Activated naive CD4-positive, alpha-beta T cell treated with anti-CD3 and anti-CD28 coated beads for 36 hours (primary cell): ENCODE measurements at regions of chr5 and their contacts with region 1.

Region 1: DNA sequence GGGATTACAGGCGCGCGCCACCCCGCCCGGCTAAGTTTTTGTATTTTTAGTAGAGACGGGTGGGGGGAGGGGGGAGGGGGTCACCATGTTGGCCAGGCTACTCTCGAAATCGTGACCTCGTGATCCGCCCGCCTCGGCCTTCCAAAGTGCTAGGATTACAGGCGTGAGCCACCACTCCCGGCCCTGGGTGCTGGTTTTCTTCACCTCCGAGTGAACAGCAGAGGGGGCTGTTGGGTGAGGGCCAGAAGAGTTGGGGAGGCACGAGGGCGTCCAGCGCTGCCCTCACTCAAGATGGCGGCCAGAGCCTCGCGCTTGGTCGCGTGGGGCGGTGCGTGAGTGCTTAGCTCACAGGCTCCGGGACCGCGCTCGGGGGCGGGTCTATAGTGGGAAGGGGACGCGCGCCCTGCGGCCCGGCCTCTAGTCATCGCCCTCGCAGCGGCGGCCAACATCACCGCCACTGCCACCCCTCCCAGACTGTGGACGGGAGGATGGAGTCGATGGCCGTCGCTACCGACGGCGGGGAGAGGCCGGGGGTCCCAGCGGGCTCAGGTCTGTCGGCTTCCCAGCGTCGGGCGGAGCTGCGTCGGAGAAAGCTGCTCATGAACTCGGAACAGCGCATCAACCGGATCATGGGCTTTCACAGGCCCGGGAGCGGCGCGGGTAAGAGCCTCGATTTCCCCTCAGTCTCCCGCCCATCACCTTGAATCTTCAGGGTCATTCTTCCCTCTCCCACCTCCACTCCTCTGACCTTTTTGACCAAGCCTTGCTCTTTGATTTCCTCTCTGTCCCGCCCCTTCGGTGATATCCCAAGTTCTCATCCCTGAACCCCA is at the start of gene CAMLG:
- DNase-seq: peak; percentile 97
- H3K4me3 Mint-ChIP-seq: peak within 1 kb of the TSS; percentile 81
- H3K27ac Mint-ChIP-seq: peak within 1 kb of the TSS; percentile 88
- H3K4me1 Mint-ChIP-seq: peaks cover 26% of the 10 kb centered on the region
- H3K27me3 Mint-ChIP-seq: no peaks in the 10 kb centered on the region
- total RNA-seq, gene CAMLG: 34.6 to 36.9 TPM

Region 2: DNA sequence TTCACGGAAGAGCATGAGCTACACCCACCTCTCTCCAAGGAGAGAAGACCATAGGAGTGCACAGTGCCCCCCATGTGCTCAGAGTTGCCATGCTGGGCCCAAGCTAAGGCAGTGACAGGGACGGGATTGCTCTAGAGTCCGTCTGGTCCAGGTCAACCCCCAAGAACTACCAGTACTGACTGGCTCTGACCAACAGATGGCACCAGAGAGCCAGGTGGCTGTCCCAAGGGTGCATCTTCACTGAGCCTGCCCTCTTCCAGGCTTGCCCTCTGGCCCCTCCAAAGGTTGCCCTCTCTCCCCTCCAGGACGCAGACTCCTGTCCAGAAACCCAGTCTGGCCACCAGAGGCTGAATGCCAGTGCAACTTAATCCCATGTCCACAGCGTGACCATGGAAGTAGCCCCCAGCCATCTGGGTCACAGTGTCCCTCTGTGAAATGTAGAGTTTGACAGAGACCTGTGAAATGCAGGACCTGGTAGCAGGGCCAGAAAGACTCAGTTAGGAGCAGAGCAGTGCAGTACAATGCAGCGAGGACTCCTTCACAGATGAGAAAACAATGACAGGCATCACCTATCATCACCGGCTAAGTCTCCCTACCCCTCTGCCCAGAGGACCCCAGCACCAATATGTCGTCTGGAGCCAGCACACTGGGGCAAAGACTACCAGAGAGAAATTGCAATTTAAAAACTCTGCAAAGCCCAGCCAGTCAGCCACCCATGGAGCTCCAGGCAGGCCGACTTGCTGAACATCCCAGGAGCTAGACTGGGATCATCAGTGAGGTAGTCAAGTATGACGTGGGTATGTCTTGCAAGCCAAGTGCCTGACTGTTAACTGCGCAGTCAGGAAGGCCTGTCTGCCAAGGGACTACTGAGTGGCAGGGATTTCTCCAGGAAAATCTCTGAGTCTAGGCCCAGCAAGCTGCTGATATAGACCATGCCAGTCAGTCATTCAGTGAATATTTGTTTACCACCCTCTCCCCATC is 553.9 kb before region 1 on chr5:
- CTCF ChIA-PET with region 1: interaction called, 8 read pairs
- intact Hi-C with region 1: loop called (anchors 2 kb)
- DNase-seq: peak; percentile 88
- H3K4me3 Mint-ChIP-seq: no peak overlapping the region
- H3K27ac Mint-ChIP-seq: no peak overlapping the region
- H3K4me1 Mint-ChIP-seq: no peaks in the 10 kb centered on the region
- H3K27me3 Mint-ChIP-seq: no peaks in the 10 kb centered on the region

Region 3: GRCh38 chr5:134411546-134412266 is 326.6 kb before region 1 on chr5 and contains the start of gene CDKN2AIPNL:
- CTCF ChIA-PET with region 1: no interaction called
- intact Hi-C with region 1: loop called (anchors 1 kb)
- DNase-seq: peak; percentile 94
- H3K4me3 Mint-ChIP-seq: peak within 1 kb of the TSS; percentile 96
- H3K27ac Mint-ChIP-seq: peak within 1 kb of the TSS; percentile 88
- H3K4me1 Mint-ChIP-seq: peaks cover 34% of the 10 kb centered on the region
- H3K27me3 Mint-ChIP-seq: no peaks in the 10 kb centered on the region
- total RNA-seq, gene CDKN2AIPNL: 31.1 to 31.5 TPM

Region 4: DNA sequence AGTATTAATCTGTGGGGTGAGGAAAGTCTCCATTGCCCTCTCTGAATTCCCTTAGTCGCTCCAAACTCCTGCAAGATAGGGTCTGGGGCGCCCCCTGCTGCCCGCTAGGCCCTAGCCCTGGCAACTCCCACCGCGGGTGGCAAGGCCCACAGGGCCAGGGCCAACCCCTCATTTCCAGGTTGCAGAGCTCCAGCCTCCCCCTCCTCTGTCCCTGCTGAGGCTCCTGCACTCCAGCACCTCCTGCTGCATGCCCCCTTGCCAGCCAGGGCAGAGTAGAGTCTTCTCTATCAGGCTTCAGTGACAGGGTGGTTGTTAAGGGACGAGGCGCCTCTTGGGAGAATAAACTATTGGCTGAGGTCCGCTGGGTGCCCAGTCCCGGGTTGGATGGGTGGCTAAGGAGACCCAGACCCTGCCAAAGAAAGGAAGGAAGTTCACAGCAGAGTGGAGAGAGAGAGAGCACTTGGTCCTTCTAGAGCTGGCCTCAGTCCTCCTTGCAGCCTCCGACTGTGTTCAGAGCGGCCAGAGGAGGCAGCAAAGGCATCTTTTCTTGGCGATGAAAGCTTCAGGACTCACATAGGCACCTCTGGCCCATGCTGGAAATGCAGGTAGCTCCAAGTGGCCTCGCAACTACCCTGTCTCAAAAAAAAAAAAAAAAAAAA is 151.4 kb before region 1 on chr5:
- CTCF ChIA-PET with region 1: interaction called, 20 read pairs
- intact Hi-C with region 1: loop called (anchors 1 kb)
- DNase-seq: peak; percentile 94
- H3K4me3 Mint-ChIP-seq: no peak overlapping the region
- H3K27ac Mint-ChIP-seq: no peak overlapping the region
- H3K4me1 Mint-ChIP-seq: peaks cover 13% of the 10 kb centered on the region
- H3K27me3 Mint-ChIP-seq: no peaks in the 10 kb centered on the region

Region 5: DNA sequence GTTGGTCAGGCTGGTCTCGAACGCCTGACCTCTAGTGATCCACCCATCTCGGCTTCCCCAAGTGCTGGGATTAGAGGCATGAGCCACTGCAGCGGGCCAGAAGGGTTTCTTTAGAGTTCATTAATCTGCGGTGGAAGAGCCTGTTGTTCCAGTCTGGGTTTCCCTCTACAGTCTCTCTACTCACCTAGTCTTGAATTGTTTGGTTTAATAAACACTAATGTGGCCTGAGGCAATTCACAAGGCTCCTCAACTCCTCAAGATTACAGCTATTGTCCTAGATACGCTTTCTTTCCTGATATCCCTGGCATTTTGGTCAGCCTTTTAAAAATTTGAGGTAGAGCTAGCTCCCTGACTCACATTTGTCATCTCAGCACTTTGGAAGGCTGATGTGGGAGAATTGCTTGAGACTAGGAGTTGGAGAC is 101.2 kb before region 1 on chr5:
- CTCF ChIA-PET with region 1: no interaction called
- intact Hi-C with region 1: loop called (anchors 1 kb)
- DNase-seq: no peak
- H3K4me3 Mint-ChIP-seq: no peak overlapping the region
- H3K27ac Mint-ChIP-seq: no peak overlapping the region
- H3K4me1 Mint-ChIP-seq: peaks cover 7% of the 10 kb centered on the region
- H3K27me3 Mint-ChIP-seq: no peaks in the 10 kb centered on the region

Region 6: DNA sequence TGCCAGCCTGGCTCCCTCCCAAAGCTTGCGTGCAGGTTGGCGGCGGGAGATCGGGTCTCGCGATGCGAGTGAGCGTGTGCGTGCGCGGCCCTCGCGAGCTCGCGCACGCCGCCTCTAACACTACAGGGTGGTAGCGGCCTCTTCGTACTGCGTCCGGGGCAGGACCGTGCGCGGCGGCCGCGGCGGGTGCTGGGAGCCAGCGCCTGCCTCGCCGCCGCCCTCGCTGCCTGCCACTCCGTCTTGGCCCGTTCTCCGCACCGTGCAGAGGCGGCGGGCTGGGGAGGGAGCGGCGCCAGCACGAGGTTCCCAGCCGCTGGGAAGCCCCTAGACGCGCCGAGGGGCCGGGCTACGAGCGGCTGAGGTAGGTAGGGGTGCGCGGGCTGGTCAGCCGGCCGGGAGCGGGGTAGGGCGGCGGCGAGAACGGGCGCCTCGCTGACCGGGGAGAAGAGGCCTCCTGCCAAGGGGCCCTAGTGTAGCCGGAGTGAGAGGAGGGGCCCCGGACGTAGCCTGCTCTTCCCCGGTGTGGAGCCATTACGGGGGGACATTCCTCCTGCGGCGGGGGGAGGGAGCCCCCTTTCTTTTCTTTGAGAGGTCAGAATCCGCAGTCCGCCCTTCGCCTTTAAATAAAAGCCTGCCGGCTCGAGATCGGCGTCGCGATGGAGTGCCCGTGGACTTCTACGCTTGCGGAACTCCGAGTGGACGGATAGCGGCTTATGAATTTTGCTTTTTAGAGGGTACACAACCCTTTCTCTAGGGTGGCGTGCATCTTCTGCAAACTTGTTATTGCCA is 107.7 kb after region 1 on chr5 and contains the start of gene C5orf24:
- CTCF ChIA-PET with region 1: interaction called, 3 read pairs
- intact Hi-C with region 1: loop called (anchors 1 kb)
- DNase-seq: peak; percentile 96
- H3K4me3 Mint-ChIP-seq: peak within 1 kb of the TSS; percentile 88
- H3K27ac Mint-ChIP-seq: peak within 1 kb of the TSS; percentile 97
- H3K4me1 Mint-ChIP-seq: peaks cover 32% of the 10 kb centered on the region
- H3K27me3 Mint-ChIP-seq: no peaks in the 10 kb centered on the region
- total RNA-seq, gene C5orf24: 17.6 to 21.2 TPM

Region 7: GRCh38 chr5:135063631-135064570 is 325.6 kb after region 1 on chr5:
- CTCF ChIA-PET with region 1: no interaction called
- intact Hi-C with region 1: no loop called
- DNase-seq: no peak
- H3K4me3 Mint-ChIP-seq: no peak overlapping the region
- H3K27ac Mint-ChIP-seq: no peak overlapping the region
- H3K4me1 Mint-ChIP-seq: no peaks in the 10 kb centered on the region
- H3K27me3 Mint-ChIP-seq: no peaks in the 10 kb centered on the region

Region 8: DNA sequence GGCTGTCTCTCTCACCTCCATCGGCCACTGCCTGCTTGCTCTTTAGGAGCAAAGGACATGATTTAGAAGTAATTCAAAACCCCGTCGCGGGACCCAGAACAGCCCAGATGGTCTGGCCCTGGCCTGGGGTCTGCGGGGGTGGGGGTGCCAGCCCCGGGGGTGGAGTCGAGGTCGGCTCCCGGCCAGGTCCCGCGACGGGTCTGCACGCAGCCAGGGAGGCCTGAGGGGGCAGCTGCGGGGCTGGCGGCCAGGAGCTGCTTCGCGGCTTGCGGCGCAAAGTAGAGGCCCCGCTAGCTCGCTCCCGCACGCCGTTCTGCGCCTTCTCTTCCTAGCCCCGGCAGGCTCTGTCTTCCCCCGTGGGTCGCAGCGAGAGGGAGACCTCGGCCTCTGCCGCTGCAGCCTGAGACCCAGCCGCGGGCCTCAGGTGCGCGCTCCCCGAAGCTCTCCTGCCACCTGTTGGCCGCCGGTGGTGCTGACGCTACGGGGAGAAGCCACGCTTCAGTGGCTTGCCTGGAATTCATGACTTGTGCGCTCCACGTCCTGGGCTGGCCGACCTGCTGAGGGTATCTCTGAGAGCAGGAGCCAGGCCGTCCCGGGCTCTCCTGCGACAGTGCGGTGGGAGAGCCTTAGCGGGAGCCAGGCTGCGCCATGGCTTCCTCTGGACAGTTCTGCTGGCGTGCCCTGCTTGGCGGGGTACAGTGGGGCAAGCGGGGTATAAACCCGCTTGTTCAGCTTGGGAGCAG is 452.9 kb after region 1 on chr5:
- CTCF ChIA-PET with region 1: no interaction called
- intact Hi-C with region 1: loop called (anchors 2 kb)
- DNase-seq: peak; percentile 84
- H3K4me3 Mint-ChIP-seq: peak overlapping the region; percentile 70
- H3K27ac Mint-ChIP-seq: no peak overlapping the region
- H3K4me1 Mint-ChIP-seq: peaks cover 2% of the 10 kb centered on the region
- H3K27me3 Mint-ChIP-seq: peaks cover 5% of the 10 kb centered on the region